ENCODE measurements at regions of chr6 and their contacts with region 1.

Region 1: DNA sequence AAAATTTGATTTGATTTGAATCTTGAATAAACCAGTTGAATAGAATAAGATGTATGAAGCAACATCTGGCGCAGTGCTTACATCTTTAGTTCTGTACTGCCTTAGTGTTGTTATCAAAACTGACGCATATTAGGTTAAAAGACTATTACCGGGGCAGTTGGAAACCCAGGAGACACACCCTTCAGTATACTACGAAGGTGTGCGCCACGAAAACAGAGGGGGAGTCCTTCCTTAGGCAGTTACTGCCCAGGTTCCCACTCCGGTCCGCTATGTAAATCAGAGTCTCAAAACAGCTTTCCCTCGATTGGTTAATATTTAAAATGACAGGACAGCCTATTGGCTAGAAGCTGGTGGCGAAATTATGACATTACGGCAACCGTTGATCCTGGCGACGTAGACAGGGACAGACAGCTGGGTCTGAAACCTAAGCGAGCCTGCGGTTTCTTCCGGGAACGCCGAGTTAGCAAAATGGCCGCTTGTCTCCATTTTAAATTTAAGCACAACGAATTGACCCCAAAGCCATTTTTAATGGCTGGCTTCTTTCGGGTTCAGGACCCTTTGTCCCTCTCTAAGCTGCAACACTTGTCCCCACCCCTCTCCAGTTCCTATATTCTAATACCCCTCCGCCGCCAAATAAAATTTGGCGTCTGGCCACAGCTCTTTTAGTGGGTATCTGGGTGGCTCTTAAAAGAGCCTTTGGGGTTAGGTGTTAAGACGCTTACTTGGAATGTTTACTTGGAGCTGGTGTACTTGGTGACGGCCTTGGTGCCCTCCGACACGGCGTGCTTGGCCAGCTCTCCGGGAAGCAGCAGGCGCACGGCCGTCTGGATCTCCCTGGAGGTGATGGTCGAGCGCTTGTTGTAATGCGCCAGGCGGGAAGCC is 35.8 kb downstream of the HFE start:
- DNase-seq: peak; percentile 96 to 98
- H3K4me3 ChIP-seq: peak overlapping the region; percentile 44
- H3K4me3 Mint-ChIP-seq: peak overlapping the region; percentile 90
- H3K27ac Mint-ChIP-seq: peak overlapping the region; percentile 99
- H3K4me1 ChIP-seq: peaks cover 23% of the 10 kb centered on the region
- H3K4me1 Mint-ChIP-seq: peaks cover 36% of the 10 kb centered on the region
- H3K27me3 ChIP-seq: no peaks in the 10 kb centered on the region
- H3K27me3 Mint-ChIP-seq: no peaks in the 10 kb centered on the region
- CTCF ChIP-seq: no peak

Region 2: GRCh38 chr6:26025894-26026832 is 96.9 kb before region 1 on chr6:
- CTCF ChIA-PET with region 1: no interaction called
- POLR2A ChIA-PET with region 1: interaction called, 79 read pairs
- intact Hi-C with region 1: loop called (anchors 1 kb)
- DNase-seq: peak; percentile 94 to 95
- H3K4me3 ChIP-seq: peak overlapping the region; percentile 74
- H3K4me3 Mint-ChIP-seq: peak overlapping the region; percentile 85
- H3K27ac Mint-ChIP-seq: peak overlapping the region; percentile 100
- H3K4me1 ChIP-seq: peaks cover 18% of the 10 kb centered on the region; the same call in 1 of the 2 replicates
- H3K4me1 Mint-ChIP-seq: peaks cover 35% of the 10 kb centered on the region
- H3K27me3 ChIP-seq: no peaks in the 10 kb centered on the region
- H3K27me3 Mint-ChIP-seq: peaks cover 4% of the 10 kb centered on the region
- CTCF ChIP-seq: peak; percentile 81 to 87

Region 3: GRCh38 chr6:26054857-26055669 is 68.0 kb before region 1 on chr6:
- CTCF ChIA-PET with region 1: no interaction called
- POLR2A ChIA-PET with region 1: interaction called, 23 read pairs
- intact Hi-C with region 1: no loop called
- DNase-seq: peak; percentile 87 to 90
- H3K4me3 ChIP-seq: peak overlapping the region; percentile 64
- H3K4me3 Mint-ChIP-seq: peak overlapping the region; percentile 83
- H3K27ac Mint-ChIP-seq: peak overlapping the region; percentile 93
- H3K4me1 ChIP-seq: peaks cover 8% of the 10 kb centered on the region
- H3K4me1 Mint-ChIP-seq: peaks cover 6% of the 10 kb centered on the region
- H3K27me3 ChIP-seq: no peaks in the 10 kb centered on the region
- H3K27me3 Mint-ChIP-seq: no peaks in the 10 kb centered on the region
- CTCF ChIP-seq: peak in 1 of 2 experiments; percentile 14

Region 4: DNA sequence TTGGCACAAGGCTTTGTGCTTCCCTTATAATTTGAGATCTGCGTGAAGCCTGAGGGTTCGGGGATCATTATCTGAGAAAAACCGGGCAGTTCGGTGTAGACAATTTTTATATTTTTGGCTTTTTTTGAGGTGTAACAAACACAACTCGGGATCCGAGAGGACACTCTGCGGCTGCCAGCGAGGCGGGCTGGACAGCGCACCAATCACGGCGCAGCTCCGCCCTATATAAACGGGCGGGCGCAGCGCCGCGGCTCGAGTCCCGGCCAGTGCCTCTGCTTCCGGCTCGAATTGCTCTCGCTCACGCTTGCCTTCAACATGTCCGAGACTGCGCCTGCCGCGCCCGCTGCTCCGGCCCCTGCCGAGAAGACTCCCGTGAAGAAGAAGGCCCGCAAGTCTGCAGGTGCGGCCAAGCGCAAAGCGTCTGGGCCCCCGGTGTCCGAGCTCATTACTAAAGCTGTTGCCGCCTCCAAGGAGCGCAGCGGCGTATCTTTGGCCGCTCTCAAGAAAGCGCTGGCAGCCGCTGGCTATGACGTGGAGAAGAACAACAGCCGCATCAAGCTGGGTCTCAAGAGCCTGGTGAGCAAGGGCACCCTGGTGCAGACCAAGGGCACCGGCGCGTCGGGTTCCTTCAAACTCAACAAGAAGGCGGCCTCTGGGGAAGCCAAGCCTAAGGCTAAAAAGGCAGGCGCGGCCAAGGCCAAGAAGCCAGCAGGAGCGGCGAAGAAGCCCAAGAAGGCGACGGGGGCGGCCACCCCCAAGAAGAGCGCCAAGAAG is 33.2 kb after region 1 on chr6:
- CTCF ChIA-PET with region 1: interaction called, 7 read pairs
- POLR2A ChIA-PET with region 1: interaction called, 336 read pairs
- intact Hi-C with region 1: loop called (anchors 1 kb)
- DNase-seq: peak; percentile 86 to 93
- H3K4me3 ChIP-seq: peak overlapping the region; percentile 64
- H3K4me3 Mint-ChIP-seq: peak overlapping the region; percentile 86
- H3K27ac Mint-ChIP-seq: peak overlapping the region; percentile 98
- H3K4me1 ChIP-seq: peaks cover 10% of the 10 kb centered on the region
- H3K4me1 Mint-ChIP-seq: peaks cover 45% of the 10 kb centered on the region
- H3K27me3 ChIP-seq: no peaks in the 10 kb centered on the region
- H3K27me3 Mint-ChIP-seq: peaks cover 15% of the 10 kb centered on the region
- CTCF ChIP-seq: no peak

Region 5: GRCh38 chr6:26249957-26250697 is 127.1 kb after region 1 on chr6:
- CTCF ChIA-PET with region 1: no interaction called
- POLR2A ChIA-PET with region 1: interaction called, 21 read pairs
- intact Hi-C with region 1: no loop called
- DNase-seq: peak; percentile 81 to 84
- H3K4me3 ChIP-seq: peak overlapping the region; percentile 97
- H3K4me3 Mint-ChIP-seq: peak overlapping the region; percentile 71
- H3K27ac Mint-ChIP-seq: peak overlapping the region; percentile 71
- H3K4me1 ChIP-seq: peaks cover 10% of the 10 kb centered on the region; the same call in 1 of the 2 replicates
- H3K4me1 Mint-ChIP-seq: peaks cover 13% of the 10 kb centered on the region
- H3K27me3 ChIP-seq: no peaks in the 10 kb centered on the region
- H3K27me3 Mint-ChIP-seq: peaks cover 3% of the 10 kb centered on the region
- CTCF ChIP-seq: peak in 1 of 2 experiments; percentile 42